ENCODE measurements at regions of chr11 and their contacts with region 1.

Region 1: GRCh38 chr11:130719220-130719915 is 196.9 kb downstream of the SNX19 start:
- DNase-seq: no peak
- ATAC-seq: no peak
- H3K4me3 ChIP-seq: no peak overlapping the region
- H3K27ac ChIP-seq: no peak overlapping the region
- H3K4me1 ChIP-seq: no peaks in the 10 kb centered on the region
- H3K27me3 ChIP-seq: peaks cover 0 to 6% (median 0%) of the 10 kb centered on the region in 3 donors
- CTCF ChIP-seq: no peak

Region 2: DNA sequence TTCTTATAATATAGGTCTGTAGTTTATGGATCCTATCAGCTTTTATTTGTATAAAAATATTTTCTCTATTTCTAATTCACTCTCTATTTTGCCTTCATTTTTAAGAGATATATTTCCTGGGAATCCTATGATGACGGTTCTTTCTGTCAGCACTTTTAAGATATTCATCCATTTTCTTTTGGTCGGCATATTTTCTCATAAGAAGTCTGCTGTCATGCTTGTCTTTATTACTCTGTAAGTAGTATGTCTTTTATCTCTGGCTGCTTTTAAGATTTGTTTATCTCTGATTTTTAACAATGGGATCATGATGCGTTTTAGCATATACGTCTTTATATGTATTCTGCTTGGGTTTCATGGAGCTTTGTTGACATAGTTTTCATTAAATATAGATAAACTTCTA is 21.5 kb after region 1 on chr11:
- intact Hi-C with region 1: loop called in 1 of 2 experiments (anchors 1 kb)
- DNase-seq: no peak
- ATAC-seq: no peak
- H3K4me3 ChIP-seq: no peak overlapping the region
- H3K27ac ChIP-seq: no peak overlapping the region
- H3K4me1 ChIP-seq: no peaks in the 10 kb centered on the region
- H3K27me3 ChIP-seq: no peaks in the 10 kb centered on the region
- CTCF ChIP-seq: no peak

Region 3: DNA sequence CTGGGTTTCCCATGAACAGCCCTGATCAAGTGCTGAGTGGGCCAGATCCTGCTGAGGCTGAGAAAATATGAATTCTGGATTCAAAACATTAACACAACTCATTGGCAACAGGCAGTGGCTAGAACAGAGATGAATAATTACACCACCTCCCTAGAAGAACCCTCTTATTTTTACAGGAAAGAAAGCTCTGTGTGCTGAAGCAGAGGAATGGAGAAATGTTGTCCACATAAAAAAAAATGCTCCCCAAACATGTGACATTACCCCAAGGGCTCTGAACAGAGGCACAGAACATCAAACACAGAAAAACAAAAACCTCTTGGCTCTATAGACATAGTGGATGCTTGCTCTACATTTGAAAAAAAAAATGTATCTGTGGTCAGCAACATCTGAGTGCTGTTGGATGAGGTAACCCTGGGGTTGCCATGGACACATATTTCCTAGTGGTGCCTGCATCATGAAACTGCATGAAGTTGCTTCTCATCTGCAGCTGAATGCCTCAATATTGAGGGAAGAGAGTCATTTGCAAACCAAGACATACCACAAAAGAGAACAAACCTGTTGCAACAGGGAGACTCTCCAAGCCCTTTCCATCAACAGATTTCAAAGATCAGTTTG is 98.1 kb after region 1 on chr11:
- intact Hi-C with region 1: no loop called
- DNase-seq: no peak
- ATAC-seq: peak in 3 of 4 donors; percentile 10 to 69 (median 53)
- H3K4me3 ChIP-seq: no peak overlapping the region
- H3K27ac ChIP-seq: no peak overlapping the region
- H3K4me1 ChIP-seq: no peaks in the 10 kb centered on the region
- H3K27me3 ChIP-seq: peaks cover 0 to 2% (median 0%) of the 10 kb centered on the region in 3 donors
- CTCF ChIP-seq: no peak

Region 4: DNA sequence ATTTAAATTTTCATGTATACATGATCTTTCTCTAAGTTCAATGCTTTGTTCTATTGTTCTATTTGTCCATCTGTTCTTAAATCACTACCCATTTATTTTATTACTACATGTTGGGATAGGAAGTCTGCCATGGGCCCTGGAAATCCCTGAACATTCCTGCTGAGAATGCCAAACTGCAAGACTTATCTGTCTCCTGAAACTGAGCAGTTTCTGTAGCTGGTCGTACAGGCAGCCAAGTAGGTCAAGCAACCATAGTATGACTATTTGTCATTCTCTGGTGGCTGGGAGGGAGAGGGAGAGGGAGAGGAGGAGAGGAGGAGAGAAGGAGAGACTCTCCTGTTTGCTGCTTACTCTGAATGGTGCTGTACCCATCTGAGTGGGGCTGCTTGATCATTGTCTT is 279.7 kb after region 1 on chr11:
- intact Hi-C with region 1: no loop called
- DNase-seq: no peak
- ATAC-seq: no peak
- H3K4me3 ChIP-seq: no peak overlapping the region
- H3K27ac ChIP-seq: no peak overlapping the region
- H3K4me1 ChIP-seq: no peaks in the 10 kb centered on the region
- H3K27me3 ChIP-seq: no peaks in the 10 kb centered on the region
- CTCF ChIP-seq: no peak

Measured in psoas muscle (tissue), 8 donors.